CD4-positive, alpha-beta T cell (primary cell): ENCODE measurements at regions of chr18 and their contacts with region 1.

Region 1: GRCh38 chr18:13318731-13319501 is 100.4 kb downstream of the LDLRAD4 start:
- DNase-seq: no peak
- ATAC-seq: no peak
- H3K4me3 ChIP-seq: no peak overlapping the region
- H3K4me3 Mint-ChIP-seq: no peak overlapping the region
- H3K27ac ChIP-seq: no peak overlapping the region
- H3K27ac Mint-ChIP-seq: no peak overlapping the region
- H3K4me1 ChIP-seq: no peaks in the 10 kb centered on the region
- H3K4me1 Mint-ChIP-seq: peaks cover 8% of the 10 kb centered on the region
- H3K27me3 ChIP-seq: no peaks in the 10 kb centered on the region
- H3K27me3 Mint-ChIP-seq: no peaks in the 10 kb centered on the region
- CTCF ChIP-seq: no peak

Region 2: GRCh38 chr18:13221869-13222855 is 96.8 kb before region 1 on chr18:
- CTCF ChIA-PET with region 1: no interaction called
- POLR2A ChIA-PET with region 1: no interaction called
- intact Hi-C with region 1: loop called in 1 of 2 experiments (anchors 10 kb)
- DNase-seq: peak in 1 of 14 experiments; percentile 2
- ATAC-seq: no peak
- H3K4me3 ChIP-seq: no peak overlapping the region
- H3K4me3 Mint-ChIP-seq: peak overlapping the region; percentile 58
- H3K27ac ChIP-seq: no peak overlapping the region
- H3K27ac Mint-ChIP-seq: peak overlapping the region; percentile 6
- H3K4me1 ChIP-seq: peaks cover 17% of the 10 kb centered on the region
- H3K4me1 Mint-ChIP-seq: peaks cover 39% of the 10 kb centered on the region
- H3K27me3 ChIP-seq: no peaks in the 10 kb centered on the region
- H3K27me3 Mint-ChIP-seq: no peaks in the 10 kb centered on the region
- CTCF ChIP-seq: no peak